HepG2 (cell line): ENCODE measurements at regions of chr5 and their contacts with region 1.

Region 1: GRCh38 chr5:82635561-82636288 is 357.6 kb upstream of the RPS23 start:
- DNase-seq: peak; percentile 98
- ATAC-seq: peak; percentile 99
- H3K4me3 ChIP-seq: no peak overlapping the region; a peak in 1 of 6 replicates
- H3K27ac ChIP-seq: peak overlapping the region; percentile 56
- H3K4me1 ChIP-seq: peaks cover 31% of the 10 kb centered on the region
- H3K27me3 ChIP-seq: no peaks in the 10 kb centered on the region
- CTCF ChIP-seq: no peak
- EP300 ChIP-seq: peak in 1 of 2 experiments; percentile 97; a peak in 2 of 4 replicates
- POLR2A ChIP-seq: no peak
- RAD21 ChIP-seq: peak; percentile 15; the same call in 1 of the 2 replicates

Region 2: DNA sequence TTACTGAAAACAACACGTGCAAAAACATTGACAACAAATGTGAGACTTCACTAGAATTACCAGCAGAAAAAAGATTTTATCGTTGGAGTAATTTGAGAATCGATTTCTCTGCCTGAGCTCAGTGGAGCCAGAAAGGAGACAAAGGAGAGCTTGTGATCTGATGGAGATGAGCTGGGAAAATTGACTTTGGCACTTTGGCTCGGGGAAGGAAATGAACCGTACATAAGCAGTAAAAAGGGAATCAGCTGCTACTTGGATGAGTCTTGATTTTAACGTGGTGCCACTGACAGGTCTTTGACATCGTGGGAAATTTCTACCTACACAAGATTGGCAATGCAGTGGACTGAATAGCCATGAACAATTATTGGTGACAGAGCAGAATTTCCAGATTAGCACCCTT is 112.8 kb before region 1 on chr5:
- CTCF ChIA-PET with region 1: no interaction called
- POLR2A ChIA-PET with region 1: no interaction called
- in situ Hi-C with region 1: no loop called
- intact Hi-C with region 1: loop called (anchors 5 kb)
- DNase-seq: peak; percentile 6
- ATAC-seq: no peak
- H3K4me3 ChIP-seq: no peak overlapping the region
- H3K27ac ChIP-seq: no peak overlapping the region
- H3K4me1 ChIP-seq: peaks cover 31% of the 10 kb centered on the region
- H3K27me3 ChIP-seq: no peaks in the 10 kb centered on the region
- CTCF ChIP-seq: no peak
- EP300 ChIP-seq: no peak
- POLR2A ChIP-seq: no peak
- RAD21 ChIP-seq: no peak

Region 3: GRCh38 chr5:82735160-82735789 is 99.5 kb after region 1 on chr5:
- CTCF ChIA-PET with region 1: no interaction called
- POLR2A ChIA-PET with region 1: no interaction called
- in situ Hi-C with region 1: no loop called
- intact Hi-C with region 1: loop called (anchors 5 kb)
- DNase-seq: peak; percentile 69
- ATAC-seq: no peak; the same call in 2 of the 3 replicates
- H3K4me3 ChIP-seq: no peak overlapping the region; a peak in 1 of 6 replicates
- H3K27ac ChIP-seq: no peak overlapping the region
- H3K4me1 ChIP-seq: peaks cover 27% of the 10 kb centered on the region
- H3K27me3 ChIP-seq: peaks cover 2 to 3% of the 10 kb centered on the region in 2 experiments; a peak in 2 of 5 replicates
- CTCF ChIP-seq: no peak
- EP300 ChIP-seq: no peak
- POLR2A ChIP-seq: no peak
- RAD21 ChIP-seq: no peak

Region 4: DNA sequence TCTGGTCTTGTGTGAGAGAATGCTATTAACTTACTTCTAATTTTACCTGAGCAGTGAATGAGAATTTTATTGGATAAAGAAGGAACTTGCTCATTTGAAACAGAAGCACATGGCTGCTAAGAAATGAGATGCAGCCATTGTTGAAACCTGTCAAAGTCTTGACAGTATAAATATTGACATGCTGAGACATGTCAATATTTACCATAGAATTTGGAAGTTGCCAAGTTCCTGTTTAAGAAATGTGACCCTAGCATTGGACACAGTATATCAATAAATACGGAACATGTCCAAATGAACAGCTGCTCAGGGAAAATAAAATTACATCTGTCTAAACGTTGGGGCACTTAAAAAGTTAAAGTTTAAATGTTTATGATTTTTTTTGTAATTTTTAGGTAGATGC is 449.4 kb after region 1 on chr5:
- CTCF ChIA-PET with region 1: no interaction called
- POLR2A ChIA-PET with region 1: no interaction called
- in situ Hi-C with region 1: no loop called
- intact Hi-C with region 1: loop called (anchors 2 kb)
- DNase-seq: peak; percentile 71
- ATAC-seq: peak; percentile 96
- H3K4me3 ChIP-seq: no peak overlapping the region
- H3K27ac ChIP-seq: no peak overlapping the region
- H3K4me1 ChIP-seq: peaks cover 21% of the 10 kb centered on the region
- H3K27me3 ChIP-seq: no peaks in the 10 kb centered on the region
- CTCF ChIP-seq: no peak
- EP300 ChIP-seq: peak; percentile 29 to 93; a peak in 3 of 4 replicates
- POLR2A ChIP-seq: no peak
- RAD21 ChIP-seq: no peak

Region 5: GRCh38 chr5:83577036-83577636 is 941.4 kb after region 1 on chr5:
- CTCF ChIA-PET with region 1: no interaction called
- POLR2A ChIA-PET with region 1: no interaction called
- in situ Hi-C with region 1: no loop called
- intact Hi-C with region 1: loop called (anchors 5 kb)
- DNase-seq: peak; percentile 91
- ATAC-seq: peak; percentile 69
- H3K4me3 ChIP-seq: no peak overlapping the region; a peak in 1 of 6 replicates
- H3K27ac ChIP-seq: no peak overlapping the region
- H3K4me1 ChIP-seq: peaks cover 16% of the 10 kb centered on the region
- H3K27me3 ChIP-seq: peaks cover 0 to 4% of the 10 kb centered on the region in 2 experiments; a peak in 2 of 5 replicates
- CTCF ChIP-seq: no peak
- EP300 ChIP-seq: peak in 1 of 2 experiments; percentile 90; a peak in 2 of 4 replicates
- POLR2A ChIP-seq: no peak
- RAD21 ChIP-seq: no peak